Uterus (tissue), 4 donors: ENCODE measurements at regions of chr7 and their contacts with region 1.

Region 1: GRCh38 chr7:134480736-134481135 is 21.8 kb upstream of the AKR1B1 start:
- DNase-seq: no peak
- H3K4me3 ChIP-seq: no peak overlapping the region
- H3K27ac ChIP-seq: no peak overlapping the region
- H3K4me1 ChIP-seq: no peaks in the 10 kb centered on the region
- H3K27me3 ChIP-seq: no peaks in the 10 kb centered on the region
- CTCF ChIP-seq: no peak
- POLR2A ChIP-seq: no peak

Region 2: DNA sequence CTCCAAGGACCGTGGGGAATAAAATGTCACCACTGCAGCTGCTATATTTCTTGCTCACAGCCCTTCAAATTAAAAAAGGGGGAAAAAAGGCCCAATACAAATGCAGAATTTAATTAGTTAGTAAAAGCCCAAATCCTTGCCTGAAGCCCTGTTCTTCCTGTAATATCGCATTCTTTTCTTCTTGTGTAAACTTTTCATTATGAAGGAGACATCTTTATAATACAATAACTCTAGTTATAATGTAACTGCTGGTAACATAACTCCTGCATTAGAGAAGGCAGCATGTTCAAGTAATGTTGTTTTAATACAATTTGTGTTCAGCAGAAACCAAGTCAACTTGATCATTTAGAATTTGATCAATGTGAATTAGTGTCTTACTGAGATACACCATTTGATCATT is 1649.8 kb before region 1 on chr7:
- intact Hi-C with region 1: loop called (anchors 5 kb)
- DNase-seq: no peak
- H3K4me3 ChIP-seq: no peak overlapping the region
- H3K27ac ChIP-seq: no peak overlapping the region
- H3K4me1 ChIP-seq: no peaks in the 10 kb centered on the region
- H3K27me3 ChIP-seq: no peaks in the 10 kb centered on the region
- CTCF ChIP-seq: no peak
- POLR2A ChIP-seq: no peak